ENCODE measurements at regions of chr9 and their contacts with region 1.

Region 1: DNA sequence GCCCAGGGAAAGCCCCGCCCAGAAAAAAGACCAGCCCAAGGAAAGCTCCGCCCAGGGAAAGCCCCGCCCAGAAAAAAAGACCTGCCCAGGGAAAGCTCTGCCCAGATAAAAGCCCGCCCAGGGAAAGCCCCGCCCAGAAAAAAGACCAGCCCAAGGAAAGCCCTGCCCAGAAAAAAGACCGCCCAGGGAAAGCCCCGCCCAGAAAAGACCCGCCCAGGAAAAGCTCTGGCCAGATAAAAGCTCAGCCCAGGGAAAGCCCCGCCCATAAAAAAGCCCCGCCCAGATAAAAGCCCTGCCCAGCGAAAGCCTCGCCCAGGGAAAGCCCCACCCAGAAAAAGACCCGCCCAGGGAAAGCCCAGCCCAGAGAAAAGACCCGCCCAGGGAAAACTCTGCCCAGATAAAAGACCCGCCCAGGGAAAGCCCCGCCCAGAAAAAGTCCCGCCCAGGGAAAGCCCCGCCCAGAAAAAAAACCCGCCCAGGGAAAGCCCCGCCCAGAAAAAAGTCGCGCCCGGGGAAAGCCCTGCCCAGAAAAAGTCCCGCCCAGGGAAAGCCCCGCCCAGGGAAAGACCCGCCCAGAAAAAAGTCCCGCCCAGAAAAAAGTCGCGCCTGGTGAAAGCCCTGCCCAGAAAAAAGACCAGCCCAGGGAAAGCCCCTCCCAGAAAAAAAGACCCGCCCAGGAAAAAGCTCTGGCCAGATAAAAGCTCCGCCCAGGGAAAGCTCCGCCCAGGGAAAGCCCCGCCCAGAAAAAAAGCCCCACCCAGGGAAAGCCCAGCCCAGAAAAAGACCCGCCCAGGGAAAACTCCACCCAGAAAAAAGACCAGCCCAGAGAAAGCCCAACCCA is 11.9 kb downstream of the GRIN1 start:
- DNase-seq: no peak
- ATAC-seq: peak; percentile 74
- H3K4me3 ChIP-seq: 0 out of 2 replicates have a peak overlapping the region, but pooled peaks have one; percentile 12
- H3K27ac ChIP-seq: peak overlapping the region; percentile 44
- H3K4me1 ChIP-seq: peaks cover 9% of the 10 kb centered on the region; the same call in 1 of the 2 replicates
- H3K27me3 ChIP-seq: no peaks in the 10 kb centered on the region
- CTCF ChIP-seq: no peak
- EP300 ChIP-seq: no peak
- POLR2A ChIP-seq: no peak
- RAD21 ChIP-seq: no peak

Region 2: GRCh38 chr9:137070201-137070905 is 80.5 kb before region 1 on chr9 and contains the start of gene SAPCD2:
- CTCF ChIA-PET with region 1: interaction called, 3 read pairs
- POLR2A ChIA-PET with region 1: interaction called, 15 read pairs
- RAD21 ChIA-PET with region 1: interaction called, 12 read pairs
- SMC1A ChIA-PET with region 1: no interaction called
- in situ Hi-C with region 1: no loop called
- intact Hi-C with region 1: no loop called
- DNase-seq: no peak
- ATAC-seq: peak; percentile 88
- H3K4me3 ChIP-seq: peak within 1 kb of the TSS; percentile 80
- H3K27ac ChIP-seq: peak within 1 kb of the TSS; percentile 70
- H3K4me1 ChIP-seq: peaks cover 33% of the 10 kb centered on the region
- H3K27me3 ChIP-seq: no peaks in the 10 kb centered on the region
- CTCF ChIP-seq: no peak
- EP300 ChIP-seq: no peak
- POLR2A ChIP-seq: peak; percentile 69
- RAD21 ChIP-seq: no peak
- polyA plus RNA-seq, gene SAPCD2: 1.6 to 2.0 TPM

Region 3: GRCh38 chr9:137095664-137096517 is 54.9 kb before region 1 on chr9:
- CTCF ChIA-PET with region 1: interaction called, 3 read pairs
- POLR2A ChIA-PET with region 1: interaction called, 10 read pairs
- RAD21 ChIA-PET with region 1: interaction called, 5 read pairs
- SMC1A ChIA-PET with region 1: no interaction called
- in situ Hi-C with region 1: no loop called
- intact Hi-C with region 1: no loop called
- DNase-seq: peak; percentile 61
- ATAC-seq: peak; percentile 99
- H3K4me3 ChIP-seq: peak overlapping the region; percentile 49; the same call in 1 of the 2 replicates
- H3K27ac ChIP-seq: peak overlapping the region; percentile 61
- H3K4me1 ChIP-seq: peaks cover 11% of the 10 kb centered on the region
- H3K27me3 ChIP-seq: no peaks in the 10 kb centered on the region
- CTCF ChIP-seq: peak; percentile 63 to 84 (median 67)
- EP300 ChIP-seq: peak in 1 of 2 experiments; percentile 52; a peak in 2 of 4 replicates
- POLR2A ChIP-seq: peak; percentile 48; the same call in 1 of the 2 replicates
- RAD21 ChIP-seq: no peak

Region 4: GRCh38 chr9:137123468-137123837 is 27.4 kb before region 1 on chr9:
- CTCF ChIA-PET with region 1: interaction called, 20 read pairs
- POLR2A ChIA-PET with region 1: interaction called, 166 read pairs
- RAD21 ChIA-PET with region 1: interaction called, 54 read pairs
- SMC1A ChIA-PET with region 1: interaction called, 19 read pairs
- in situ Hi-C with region 1: no loop called
- intact Hi-C with region 1: loop called (anchors 5 kb)
- DNase-seq: peak; percentile 91
- ATAC-seq: peak; percentile 30
- H3K4me3 ChIP-seq: 0 out of 2 replicates have a peak overlapping the region, but pooled peaks have one; percentile 3
- H3K27ac ChIP-seq: peak overlapping the region; percentile 47
- H3K4me1 ChIP-seq: peaks cover 42% of the 10 kb centered on the region
- H3K27me3 ChIP-seq: no peaks in the 10 kb centered on the region
- CTCF ChIP-seq: no peak
- EP300 ChIP-seq: no peak
- POLR2A ChIP-seq: no peak
- RAD21 ChIP-seq: no peak

Region 5: DNA sequence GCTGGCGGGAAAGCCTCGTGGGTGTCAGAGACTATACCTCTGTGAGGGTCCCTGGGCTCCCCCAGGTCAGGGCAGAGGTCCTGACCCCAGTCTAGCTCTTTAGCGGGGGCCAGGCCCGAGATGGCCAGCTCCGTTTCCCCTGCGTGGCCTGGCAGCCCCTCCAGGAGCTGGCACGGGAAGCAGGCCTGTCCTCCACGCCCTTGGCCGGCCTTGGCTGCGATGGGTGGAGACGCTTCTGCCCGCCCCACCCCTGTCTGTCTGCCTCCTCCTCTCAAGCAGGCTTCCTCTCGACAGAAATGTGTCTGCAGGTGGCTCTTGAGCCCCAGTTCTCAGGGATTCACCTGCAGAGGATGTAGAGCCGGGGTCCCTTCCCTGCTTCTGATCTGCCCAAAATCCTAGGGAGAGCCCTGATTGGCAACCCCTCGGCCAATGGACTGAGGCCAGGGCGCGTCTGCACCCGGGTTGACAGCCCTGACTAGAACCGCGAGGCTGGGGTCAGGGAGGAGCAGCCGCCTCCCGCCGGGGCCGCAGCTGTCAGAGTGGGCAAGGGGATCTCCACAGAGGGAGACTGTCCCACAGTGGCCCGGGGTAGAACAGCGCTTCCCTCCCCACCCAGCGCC is 14.5 kb before region 1 on chr9:
- CTCF ChIA-PET with region 1: interaction called, 4 read pairs
- POLR2A ChIA-PET with region 1: interaction called, 166 read pairs
- RAD21 ChIA-PET with region 1: interaction called, 54 read pairs
- SMC1A ChIA-PET with region 1: interaction called, 28 read pairs
- in situ Hi-C with region 1: no loop called
- intact Hi-C with region 1: no loop called
- DNase-seq: no peak
- ATAC-seq: peak; percentile 59
- H3K4me3 ChIP-seq: no peak overlapping the region
- H3K27ac ChIP-seq: no peak overlapping the region
- H3K4me1 ChIP-seq: no peaks in the 10 kb centered on the region
- H3K27me3 ChIP-seq: peaks cover 10 to 14% of the 10 kb centered on the region in 2 experiments
- CTCF ChIP-seq: no peak
- EP300 ChIP-seq: no peak
- POLR2A ChIP-seq: no peak
- RAD21 ChIP-seq: no peak

Region 6: DNA sequence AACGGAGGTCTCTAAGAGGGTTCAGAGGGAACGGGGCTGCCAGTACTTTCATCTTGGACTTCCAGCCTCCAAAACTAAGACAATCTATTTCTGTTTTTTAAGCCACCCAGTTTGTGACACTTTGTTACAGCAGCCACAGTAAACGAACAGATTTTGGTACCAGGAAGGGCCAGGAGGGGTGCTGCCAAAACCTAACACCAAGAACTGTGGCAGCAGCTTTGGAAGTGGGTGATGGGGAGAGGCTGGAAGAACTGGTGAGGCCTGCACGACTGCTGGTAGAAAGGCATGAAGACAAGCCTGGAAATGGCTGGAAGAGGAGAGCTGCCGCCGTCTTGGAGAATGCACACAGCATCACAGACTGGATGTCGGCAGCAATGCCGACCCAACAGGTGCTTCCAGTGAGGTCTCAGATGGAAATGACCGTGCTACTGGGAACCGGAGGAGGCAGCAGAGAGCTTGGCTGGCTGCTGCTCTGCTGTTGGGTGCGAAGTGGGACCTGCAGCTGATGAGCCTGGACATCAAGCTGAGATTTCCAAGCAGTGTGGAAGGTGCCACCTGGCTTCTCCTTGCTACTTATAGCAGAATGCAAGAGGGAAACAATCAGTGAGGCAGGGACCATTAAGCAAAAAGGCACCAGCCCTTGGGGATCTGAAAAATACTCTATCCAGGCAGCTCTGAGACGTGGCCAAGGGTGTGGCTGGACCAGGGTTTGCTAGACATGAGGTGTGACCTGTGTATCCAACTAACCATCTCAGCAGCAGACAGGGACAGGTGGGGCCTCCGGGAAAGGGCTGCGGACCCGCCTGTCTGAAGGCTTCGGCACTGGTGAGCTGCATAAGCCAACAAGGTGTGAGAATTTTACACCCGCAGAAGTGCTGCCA is 25.7 kb after region 1 on chr9:
- CTCF ChIA-PET with region 1: interaction called, 5 read pairs
- POLR2A ChIA-PET with region 1: interaction called, 9 read pairs
- RAD21 ChIA-PET with region 1: interaction called, 14 read pairs
- SMC1A ChIA-PET with region 1: no interaction called
- in situ Hi-C with region 1: no loop called
- intact Hi-C with region 1: no loop called
- DNase-seq: no peak
- ATAC-seq: peak; percentile 80
- H3K4me3 ChIP-seq: no peak overlapping the region
- H3K27ac ChIP-seq: no peak overlapping the region
- H3K4me1 ChIP-seq: no peaks in the 10 kb centered on the region
- H3K27me3 ChIP-seq: no peaks in the 10 kb centered on the region
- CTCF ChIP-seq: peak; percentile 57 to 64 (median 59); a peak in 5 of 6 replicates
- EP300 ChIP-seq: no peak
- POLR2A ChIP-seq: 0 out of 2 replicates have a peak, but pooled peaks have one; percentile 5
- RAD21 ChIP-seq: peak; percentile 37; the same call in 1 of the 2 replicates

Region 7: GRCh38 chr9:137200311-137201204 is 49.7 kb after region 1 on chr9 and contains the start of gene TPRN:
- CTCF ChIA-PET with region 1: interaction called, 6 read pairs
- POLR2A ChIA-PET with region 1: interaction called, 29 read pairs
- RAD21 ChIA-PET with region 1: interaction called, 6 read pairs
- SMC1A ChIA-PET with region 1: interaction called, 5 read pairs
- in situ Hi-C with region 1: no loop called
- intact Hi-C with region 1: no loop called
- DNase-seq: peak; percentile 95
- ATAC-seq: peak; percentile 96
- H3K4me3 ChIP-seq: peak within 1 kb of the TSS; percentile 77
- H3K27ac ChIP-seq: peak within 1 kb of the TSS; percentile 62
- H3K4me1 ChIP-seq: peaks cover 32% of the 10 kb centered on the region
- H3K27me3 ChIP-seq: no peaks in the 10 kb centered on the region
- CTCF ChIP-seq: no peak
- EP300 ChIP-seq: no peak
- POLR2A ChIP-seq: peak; percentile 95
- RAD21 ChIP-seq: no peak
- polyA plus RNA-seq, gene TPRN: 0.18 to 0.75 TPM

Region 8: DNA sequence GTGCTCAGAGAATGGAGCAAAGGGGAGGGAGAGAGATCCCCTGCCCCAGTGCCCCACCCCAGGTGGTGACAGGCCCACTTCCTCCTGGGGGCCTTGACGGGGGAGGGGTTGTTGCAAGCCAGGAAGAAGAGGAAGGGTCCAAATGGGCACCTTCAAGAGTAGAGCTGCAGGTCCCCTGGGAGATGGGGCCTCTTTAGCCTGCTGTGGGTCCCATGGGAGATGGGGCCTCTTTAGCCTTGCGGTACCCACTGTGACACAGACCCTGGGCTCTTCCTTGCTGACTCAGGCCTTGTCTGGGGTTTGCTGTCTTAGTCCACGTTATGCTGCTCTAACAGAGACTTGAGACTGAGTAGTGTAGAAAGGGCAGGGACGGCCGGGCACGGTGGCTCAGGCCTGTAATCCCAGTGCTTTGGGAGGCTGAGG is 117.1 kb after region 1 on chr9:
- CTCF ChIA-PET with region 1: no interaction called
- POLR2A ChIA-PET with region 1: no interaction called
- RAD21 ChIA-PET with region 1: no interaction called
- SMC1A ChIA-PET with region 1: no interaction called
- in situ Hi-C with region 1: no loop called
- intact Hi-C with region 1: no loop called
- DNase-seq: peak; percentile 60
- ATAC-seq: peak; percentile 91
- H3K4me3 ChIP-seq: no peak overlapping the region
- H3K27ac ChIP-seq: peak overlapping the region; percentile 47
- H3K4me1 ChIP-seq: peaks cover 17% of the 10 kb centered on the region
- H3K27me3 ChIP-seq: no peaks in the 10 kb centered on the region
- CTCF ChIP-seq: no peak
- EP300 ChIP-seq: no peak
- POLR2A ChIP-seq: no peak
- RAD21 ChIP-seq: no peak